MCF 10A (cell line): ENCODE measurements at regions of chr1 and their contacts with region 1.

Region 1: DNA sequence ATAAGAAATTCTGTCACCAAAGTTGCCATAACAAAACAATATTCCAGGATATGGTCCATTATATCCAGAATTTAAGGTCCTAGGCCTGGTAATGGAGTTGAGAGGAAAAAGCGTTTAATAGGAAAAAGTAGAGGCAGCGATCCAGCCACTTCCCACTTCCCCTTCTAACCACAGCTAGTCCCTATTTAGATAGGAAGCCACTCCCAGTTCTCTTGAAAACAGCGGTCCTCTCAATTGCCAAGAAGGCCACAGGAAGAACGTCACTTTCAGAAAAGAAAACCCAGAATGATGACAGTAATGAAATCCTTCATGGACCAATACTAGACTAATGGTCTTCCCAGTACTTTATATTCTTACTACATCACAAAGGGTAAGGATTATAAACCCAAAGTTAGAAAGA is 38.6 kb downstream of the ABL2 start:
- DNase-seq: no peak
- H3K4me3 Mint-ChIP-seq: no peak overlapping the region
- H3K27ac Mint-ChIP-seq: no peak overlapping the region
- H3K4me1 Mint-ChIP-seq: peaks cover 12% of the 10 kb centered on the region
- H3K27me3 Mint-ChIP-seq: no peaks in the 10 kb centered on the region
- CTCF ChIP-seq: no peak

Region 2: GRCh38 chr1:178774263-178774662 is 416.6 kb before region 1 on chr1:
- CTCF ChIA-PET with region 1: interaction called, 5 read pairs
- POLR2A ChIA-PET with region 1: no interaction called
- intact Hi-C with region 1: loop called (anchors 5 kb)
- DNase-seq: peak; percentile 54
- H3K4me3 Mint-ChIP-seq: no peak overlapping the region
- H3K27ac Mint-ChIP-seq: no peak overlapping the region
- H3K4me1 Mint-ChIP-seq: no peaks in the 10 kb centered on the region
- H3K27me3 Mint-ChIP-seq: no peaks in the 10 kb centered on the region
- CTCF ChIP-seq: peak; percentile 55

Region 3: DNA sequence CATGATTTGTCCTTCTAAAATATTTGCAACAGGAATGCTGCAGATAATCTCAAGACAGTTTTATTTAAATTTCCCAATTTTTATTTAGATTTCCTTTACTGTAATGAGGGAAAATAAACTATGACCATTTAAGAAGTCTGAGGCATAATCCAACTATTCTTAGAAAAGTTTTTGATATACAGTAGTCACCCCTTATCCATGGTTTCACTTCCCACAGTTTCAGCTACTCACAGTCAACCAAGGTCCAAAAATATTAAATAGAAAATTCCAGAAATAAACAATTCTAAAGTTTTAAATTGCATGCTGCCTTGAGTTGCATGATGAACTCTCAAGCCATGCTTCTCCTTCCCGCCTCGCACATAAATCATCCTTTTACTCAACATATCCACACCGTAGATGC is 75.7 kb before region 1 on chr1:
- CTCF ChIA-PET with region 1: interaction called, 49 read pairs
- POLR2A ChIA-PET with region 1: interaction called, 4 read pairs
- intact Hi-C with region 1: no loop called
- DNase-seq: no peak
- H3K4me3 Mint-ChIP-seq: no peak overlapping the region
- H3K27ac Mint-ChIP-seq: no peak overlapping the region
- H3K4me1 Mint-ChIP-seq: no peaks in the 10 kb centered on the region
- H3K27me3 Mint-ChIP-seq: no peaks in the 10 kb centered on the region
- CTCF ChIP-seq: no peak

Region 4: GRCh38 chr1:179142889-179143299 is 48.0 kb before region 1 on chr1:
- CTCF ChIA-PET with region 1: no interaction called
- POLR2A ChIA-PET with region 1: interaction called, 4 read pairs
- intact Hi-C with region 1: loop called (anchors 1 kb)
- DNase-seq: peak; percentile 97
- H3K4me3 Mint-ChIP-seq: peak overlapping the region; percentile 72
- H3K27ac Mint-ChIP-seq: peak overlapping the region; percentile 79
- H3K4me1 Mint-ChIP-seq: peaks cover 38% of the 10 kb centered on the region
- H3K27me3 Mint-ChIP-seq: no peaks in the 10 kb centered on the region
- CTCF ChIP-seq: no peak

Region 5: GRCh38 chr1:179164494-179164893 is 26.4 kb before region 1 on chr1:
- CTCF ChIA-PET with region 1: no interaction called
- POLR2A ChIA-PET with region 1: no interaction called
- intact Hi-C with region 1: no loop called
- DNase-seq: peak; percentile 47
- H3K4me3 Mint-ChIP-seq: no peak overlapping the region
- H3K27ac Mint-ChIP-seq: no peak overlapping the region
- H3K4me1 Mint-ChIP-seq: peaks cover 12% of the 10 kb centered on the region
- H3K27me3 Mint-ChIP-seq: no peaks in the 10 kb centered on the region
- CTCF ChIP-seq: no peak

Region 6: DNA sequence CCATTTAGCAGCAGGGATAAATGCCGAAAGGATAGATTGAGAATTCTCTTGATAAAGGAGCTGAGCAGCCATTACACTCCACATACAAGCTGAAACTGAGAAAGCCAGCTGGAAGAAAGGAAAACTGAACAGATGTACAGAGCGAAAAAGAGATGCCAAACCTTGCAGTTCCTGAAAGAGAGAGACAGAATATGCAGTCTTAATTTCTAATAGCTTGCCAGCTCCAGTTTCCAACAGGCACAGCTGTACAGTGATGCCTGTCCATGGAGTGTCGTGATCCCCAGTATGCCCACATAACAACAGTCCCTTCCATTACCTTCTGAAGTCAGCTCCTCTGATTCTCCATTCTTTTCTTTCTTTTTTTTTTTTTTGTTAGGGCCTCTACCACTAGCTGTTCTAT is 16.0 kb after region 1 on chr1:
- CTCF ChIA-PET with region 1: interaction called, 17 read pairs
- POLR2A ChIA-PET with region 1: interaction called, 4 read pairs
- intact Hi-C with region 1: no loop called
- DNase-seq: no peak
- H3K4me3 Mint-ChIP-seq: no peak overlapping the region
- H3K27ac Mint-ChIP-seq: no peak overlapping the region
- H3K4me1 Mint-ChIP-seq: peaks cover 16% of the 10 kb centered on the region
- H3K27me3 Mint-ChIP-seq: no peaks in the 10 kb centered on the region
- CTCF ChIP-seq: no peak

Region 7: DNA sequence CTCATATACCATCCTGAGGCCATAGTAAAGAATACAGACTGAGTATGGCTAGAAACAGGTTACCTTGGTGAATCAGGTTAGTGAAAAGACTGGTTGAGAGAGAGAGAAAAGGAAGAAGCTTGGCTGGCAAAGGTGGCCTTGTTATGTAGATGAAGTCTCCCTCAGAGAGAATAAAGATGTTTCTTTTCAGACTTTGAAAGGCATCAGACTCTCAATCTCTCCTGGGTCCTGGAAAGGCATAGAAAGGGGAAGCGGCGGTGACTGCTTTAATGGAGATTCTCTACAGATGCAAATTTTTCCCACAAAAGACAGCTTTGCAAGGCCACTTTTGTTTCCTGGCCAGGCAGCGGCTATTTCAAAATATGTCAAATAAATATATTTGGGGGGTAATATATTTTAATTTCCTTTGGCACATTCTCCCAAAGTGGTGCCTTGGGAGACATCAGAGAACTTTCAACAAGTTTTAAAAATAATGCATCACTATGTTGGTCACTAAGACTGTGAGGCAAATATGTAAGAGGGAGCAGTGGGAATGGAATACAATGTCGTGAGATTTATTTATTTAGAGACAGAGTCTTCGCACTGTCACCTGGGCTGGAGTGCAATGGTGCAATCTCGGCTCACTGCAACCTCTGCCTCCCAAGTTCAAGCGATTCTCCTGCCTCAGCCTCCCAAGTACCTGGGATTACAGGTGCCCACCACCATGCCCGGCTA is 338.8 kb after region 1 on chr1:
- CTCF ChIA-PET with region 1: no interaction called
- POLR2A ChIA-PET with region 1: no interaction called
- intact Hi-C with region 1: no loop called
- DNase-seq: no peak
- H3K4me3 Mint-ChIP-seq: no peak overlapping the region
- H3K27ac Mint-ChIP-seq: no peak overlapping the region
- H3K4me1 Mint-ChIP-seq: no peaks in the 10 kb centered on the region
- H3K27me3 Mint-ChIP-seq: peaks cover 8% of the 10 kb centered on the region
- CTCF ChIP-seq: no peak